Activated T-helper 1 cell treated with anti-CD3 and anti-CD28 coated beads, Interleukin-12 subunit alpha, Interleukin-12 subunit beta, Interleukin-2, Interleukin-4 antibody, amounts not matched to agents 30 ng/mL and 10 ng/mL and 1 ng/mL, durations not matched to agents 14 hours and 24 hours and 36 hours (primary cell): ENCODE measurements at regions of chr1 and their contacts with region 1.

Region 1: GRCh38 chr1:235504496-235505222 is 407 bp upstream of the B3GALNT2 start:
- DNase-seq: peak; percentile 98
- H3K4me3 Mint-ChIP-seq: peak overlapping the region; percentile 92
- H3K27ac Mint-ChIP-seq: peak overlapping the region; percentile 97
- H3K4me1 Mint-ChIP-seq: peaks cover 41% of the 10 kb centered on the region
- H3K27me3 Mint-ChIP-seq: peaks cover 16% of the 10 kb centered on the region

Region 2: GRCh38 chr1:235128456-235129328 is 376.0 kb before region 1 on chr1 and contains the start of gene TOMM20:
- intact Hi-C with region 1: loop called (anchors 2 kb)
- DNase-seq: peak; percentile 94
- H3K4me3 Mint-ChIP-seq: peak within 1 kb of the TSS; percentile 99
- H3K27ac Mint-ChIP-seq: peak within 1 kb of the TSS; percentile 94
- H3K4me1 Mint-ChIP-seq: peaks cover 45% of the 10 kb centered on the region
- H3K27me3 Mint-ChIP-seq: no peaks in the 10 kb centered on the region
- total RNA-seq, gene TOMM20: 112 and 137 TPM in 2 replicates

Region 3: DNA sequence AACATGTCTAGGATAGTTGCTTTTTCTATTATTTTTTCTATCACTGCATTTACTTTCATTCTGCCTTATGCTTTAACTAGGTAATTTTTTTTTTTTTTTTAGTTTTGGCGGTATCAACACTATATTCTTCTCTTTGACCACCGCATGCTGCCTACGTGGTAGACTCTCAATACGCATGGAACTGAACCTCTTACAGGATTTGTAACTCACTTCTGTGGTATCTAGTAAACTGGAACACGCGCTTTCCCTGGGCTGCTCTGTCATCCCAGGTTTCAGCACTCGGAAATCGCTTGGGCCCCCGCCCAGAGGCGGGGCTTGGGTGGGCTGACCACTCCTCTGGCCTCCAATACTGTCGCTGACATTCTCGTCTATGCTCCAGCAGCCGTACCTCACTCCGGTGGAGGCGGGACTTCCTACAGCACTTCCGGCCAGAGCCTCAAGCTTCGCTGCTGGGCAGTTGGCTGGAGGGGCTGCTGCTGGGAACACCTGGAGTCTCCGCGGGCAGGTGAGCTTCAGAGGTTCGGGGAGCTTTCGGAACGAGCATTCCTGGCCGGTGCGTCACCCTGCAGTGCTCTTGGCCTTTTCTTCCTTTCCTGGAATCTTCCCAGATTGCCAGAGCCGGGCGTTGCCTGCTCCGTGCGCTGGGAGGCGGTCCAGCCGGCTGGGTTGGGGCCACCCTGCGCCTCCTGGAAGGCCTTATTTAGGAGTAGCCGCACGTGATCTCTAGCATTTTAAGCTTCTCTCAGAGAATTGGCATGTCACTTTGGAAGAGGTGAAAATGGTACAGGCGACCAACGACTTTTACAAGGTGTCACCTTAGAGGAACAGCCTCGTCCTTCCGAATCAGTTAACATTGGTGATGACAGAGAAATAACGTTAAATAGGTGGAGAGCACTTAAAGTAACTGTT is 137.4 kb before region 1 on chr1 and contains the start of gene TBCE:
- intact Hi-C with region 1: loop called (anchors 5 kb)
- DNase-seq: peak; percentile 87
- H3K4me3 Mint-ChIP-seq: peak within 1 kb of the TSS; percentile 95
- H3K27ac Mint-ChIP-seq: peak within 1 kb of the TSS; percentile 93
- H3K4me1 Mint-ChIP-seq: peaks cover 34% of the 10 kb centered on the region
- H3K27me3 Mint-ChIP-seq: no peaks in the 10 kb centered on the region
- total RNA-seq, gene TBCE: 29.0 and 29.2 TPM in 2 replicates

Region 4: DNA sequence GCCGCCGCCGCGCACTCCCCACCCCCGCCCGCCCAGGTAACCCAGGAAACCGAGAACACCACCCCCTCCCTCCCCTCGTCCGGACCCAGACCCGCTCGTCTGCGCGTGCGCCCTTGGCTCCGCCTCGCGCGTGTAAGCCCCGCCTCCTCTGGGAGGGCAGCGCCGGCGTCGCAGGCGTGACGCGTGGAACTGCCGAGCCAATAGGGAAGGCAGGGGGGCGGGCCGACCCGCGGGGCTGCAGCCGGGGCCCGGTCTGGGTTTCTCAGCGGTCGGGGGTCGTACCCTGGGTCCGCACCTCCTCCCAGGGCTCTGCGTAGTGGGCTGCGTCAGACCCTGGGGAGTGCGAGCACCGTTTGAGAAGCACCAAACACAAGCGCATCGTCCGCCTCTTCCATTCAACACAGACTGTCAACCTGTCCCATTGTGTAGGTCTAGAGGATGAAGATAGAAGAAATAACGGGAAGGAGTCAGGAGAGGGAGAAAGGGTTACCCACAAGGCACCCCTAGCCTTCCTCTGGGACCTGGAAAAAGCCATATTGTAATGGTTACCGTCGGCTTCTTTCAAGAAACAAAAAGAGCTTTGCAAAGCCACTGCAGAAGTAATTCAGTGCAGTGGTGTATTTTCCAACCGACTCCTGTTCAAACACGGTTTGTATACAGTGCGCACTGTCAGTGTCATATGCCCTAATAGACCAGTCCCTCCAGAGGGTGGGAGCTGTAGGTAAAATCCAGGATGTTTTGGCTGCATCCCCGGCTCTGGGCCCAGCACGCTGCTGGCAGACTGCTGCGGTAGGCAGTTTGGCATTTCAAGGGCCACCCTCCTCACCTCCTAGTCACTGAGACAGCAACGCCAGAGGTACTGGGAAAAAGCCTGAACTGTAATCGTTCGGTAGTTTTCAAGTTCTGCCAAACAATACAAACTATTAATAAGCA is 362.5 kb after region 1 on chr1:
- intact Hi-C with region 1: loop called (anchors 5 kb)
- DNase-seq: peak; percentile 99
- H3K4me3 Mint-ChIP-seq: peak overlapping the region; percentile 98
- H3K27ac Mint-ChIP-seq: peak overlapping the region; percentile 98
- H3K4me1 Mint-ChIP-seq: peaks cover 57% of the 10 kb centered on the region
- H3K27me3 Mint-ChIP-seq: no peaks in the 10 kb centered on the region

Region 5: DNA sequence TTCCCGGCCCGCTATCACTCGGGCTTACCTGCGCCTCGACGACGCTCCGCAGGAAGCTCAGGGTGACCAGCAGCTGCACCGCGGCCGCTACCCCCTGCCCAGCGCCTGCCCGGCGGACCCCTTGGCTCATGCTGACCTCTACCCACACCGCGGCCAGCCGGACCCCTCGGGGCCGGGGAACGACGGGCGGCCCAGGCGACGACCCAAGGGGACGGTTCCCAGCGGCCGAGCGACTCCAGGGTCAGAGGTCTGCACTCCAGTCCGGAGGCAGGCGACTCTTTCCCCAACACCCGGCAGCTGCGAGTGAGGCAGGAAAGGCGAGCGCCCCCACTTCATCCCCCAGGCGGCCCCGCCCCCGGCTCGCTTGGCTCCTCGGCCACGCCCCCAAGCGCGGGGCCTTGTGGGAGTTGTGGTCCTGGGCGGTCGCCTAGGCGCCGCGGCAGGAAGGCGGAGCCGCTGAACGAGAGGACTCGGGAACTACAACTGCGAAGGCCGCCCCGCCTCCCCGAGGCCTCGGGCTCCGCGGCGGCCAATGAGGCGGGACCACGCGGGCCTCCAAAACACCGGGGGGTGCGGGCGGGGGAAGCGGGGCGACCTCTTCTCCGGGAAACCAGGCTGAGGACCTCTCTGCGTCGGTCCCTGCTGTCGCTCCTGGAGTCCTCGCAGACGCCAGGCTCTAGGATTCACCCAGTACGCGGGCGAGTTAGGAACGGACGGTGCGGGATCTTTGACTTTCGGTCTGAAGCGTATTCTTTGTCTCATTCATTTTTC is 777.2 kb after region 1 on chr1 and contains the start of gene ERO1B:
- intact Hi-C with region 1: loop called (anchors 2 kb)
- DNase-seq: peak; percentile 98
- H3K4me3 Mint-ChIP-seq: peak within 1 kb of the TSS; percentile 90
- H3K27ac Mint-ChIP-seq: peak within 1 kb of the TSS; percentile 80
- H3K4me1 Mint-ChIP-seq: peaks cover 45% of the 10 kb centered on the region
- H3K27me3 Mint-ChIP-seq: peaks cover 12% of the 10 kb centered on the region
- total RNA-seq, gene ERO1B: 2.1 and 2.4 TPM in 2 replicates